ENCODE measurements at regions of chr11 and their contacts with region 1.

Region 1: GRCh38 chr11:47523468-47524225 is 29.3 kb downstream of the CELF1 start:
- DNase-seq: peak in 7 of 9 donors; percentile 39 to 78 (median 62)
- ATAC-seq: peak; percentile 92
- H3K4me3 ChIP-seq: peak overlapping the region; percentile 24
- H3K4me3 Mint-ChIP-seq: peak overlapping the region; percentile 30 to 80 (median 73)
- H3K27ac ChIP-seq: peak overlapping the region; percentile 78
- H3K27ac Mint-ChIP-seq: peak overlapping the region; percentile 84 to 96 (median 90)
- H3K4me1 ChIP-seq: peaks cover 36 to 37% of the 10 kb centered on the region in 2 donors
- H3K4me1 Mint-ChIP-seq: peaks cover 46 to 88% (median 69%) of the 10 kb centered on the region in 7 donors
- H3K27me3 ChIP-seq: no peaks in the 10 kb centered on the region
- H3K27me3 Mint-ChIP-seq: no peaks in the 10 kb centered on the region

Region 2: DNA sequence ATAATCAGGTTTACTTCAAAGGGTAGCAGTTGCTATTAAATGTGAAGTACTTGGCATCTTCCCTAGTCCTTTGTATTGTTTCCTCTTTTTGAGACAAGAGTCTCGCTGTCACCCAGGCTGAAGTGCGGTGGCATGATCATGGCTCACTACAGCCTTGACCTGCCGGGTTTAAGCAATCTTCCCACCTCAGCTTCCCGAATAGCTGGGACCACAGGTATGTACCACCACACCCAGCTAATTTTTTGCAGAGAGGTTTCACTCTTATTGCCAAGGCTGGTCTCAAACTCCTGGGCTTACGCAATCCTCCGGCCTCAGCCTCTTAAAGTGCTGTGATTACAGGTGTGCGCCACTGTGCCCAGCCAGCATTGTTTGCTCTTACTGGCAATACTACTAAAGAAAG is 38.5 kb before region 1 on chr11:
- CTCF ChIA-PET with region 1: no interaction called
- POLR2A ChIA-PET with region 1: no interaction called
- intact Hi-C with region 1: loop called in 1 of 2 experiments (anchors 5 kb)
- DNase-seq: no peak
- ATAC-seq: no peak
- H3K4me3 ChIP-seq: no peak overlapping the region
- H3K4me3 Mint-ChIP-seq: no peak overlapping the region
- H3K27ac ChIP-seq: no peak overlapping the region
- H3K27ac Mint-ChIP-seq: no peak overlapping the region
- H3K4me1 ChIP-seq: no peaks in the 10 kb centered on the region
- H3K4me1 Mint-ChIP-seq: peaks cover 0 to 15% (median 3%) of the 10 kb centered on the region in 7 donors
- H3K27me3 ChIP-seq: no peaks in the 10 kb centered on the region
- H3K27me3 Mint-ChIP-seq: no peaks in the 10 kb centered on the region

Region 3: GRCh38 chr11:47509077-47509536 is 14.5 kb before region 1 on chr11:
- CTCF ChIA-PET with region 1: interaction called, 5 read pairs
- POLR2A ChIA-PET with region 1: interaction called, 3 read pairs
- intact Hi-C with region 1: loop called (anchors 2 kb)
- DNase-seq: peak in 4 of 9 donors; percentile 3 to 28 (median 22)
- ATAC-seq: peak; percentile 46
- H3K4me3 ChIP-seq: no peak overlapping the region
- H3K4me3 Mint-ChIP-seq: peak overlapping the region in 9 of 10 donors; percentile 18 to 67 (median 58)
- H3K27ac ChIP-seq: peak overlapping the region; percentile 33
- H3K27ac Mint-ChIP-seq: peak overlapping the region; percentile 63 to 87 (median 82)
- H3K4me1 ChIP-seq: peaks cover 14 to 37% of the 10 kb centered on the region in 2 donors
- H3K4me1 Mint-ChIP-seq: peaks cover 50 to 88% (median 76%) of the 10 kb centered on the region in 7 donors
- H3K27me3 ChIP-seq: no peaks in the 10 kb centered on the region
- H3K27me3 Mint-ChIP-seq: no peaks in the 10 kb centered on the region